ENCODE measurements at regions of chr3 and their contacts with region 1.

Region 1: GRCh38 chr3:27681245-27681748 is 40.8 kb downstream of the EOMES start:
- DNase-seq: no peak
- H3K4me3 ChIP-seq: no peak overlapping the region
- CTCF ChIP-seq: no peak
- POLR2A ChIP-seq: no peak

Region 2: DNA sequence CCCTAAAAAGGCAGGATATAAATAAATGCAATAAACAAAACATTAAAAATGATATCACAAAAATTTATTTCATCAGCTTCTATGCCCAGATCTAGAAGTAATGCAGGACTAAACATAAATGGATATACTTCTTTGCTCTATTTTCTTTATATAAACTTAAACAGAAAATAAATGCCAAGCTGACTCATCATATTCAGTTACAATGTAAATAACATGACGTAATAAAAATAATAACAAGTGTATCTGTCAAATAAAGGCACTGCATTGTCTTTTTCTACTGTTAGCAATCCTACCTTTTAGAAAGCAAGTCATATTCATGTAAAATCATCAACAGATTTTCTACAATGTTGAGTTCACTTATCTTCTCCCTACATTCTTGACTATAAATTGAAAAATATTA is 373.7 kb before region 1 on chr3:
- intact Hi-C with region 1: loop called (anchors 10 kb)
- DNase-seq: no peak
- H3K4me3 ChIP-seq: no peak overlapping the region
- CTCF ChIP-seq: no peak
- POLR2A ChIP-seq: no peak